ENCODE measurements at regions of chr10 and their contacts with region 1.

Region 1: DNA sequence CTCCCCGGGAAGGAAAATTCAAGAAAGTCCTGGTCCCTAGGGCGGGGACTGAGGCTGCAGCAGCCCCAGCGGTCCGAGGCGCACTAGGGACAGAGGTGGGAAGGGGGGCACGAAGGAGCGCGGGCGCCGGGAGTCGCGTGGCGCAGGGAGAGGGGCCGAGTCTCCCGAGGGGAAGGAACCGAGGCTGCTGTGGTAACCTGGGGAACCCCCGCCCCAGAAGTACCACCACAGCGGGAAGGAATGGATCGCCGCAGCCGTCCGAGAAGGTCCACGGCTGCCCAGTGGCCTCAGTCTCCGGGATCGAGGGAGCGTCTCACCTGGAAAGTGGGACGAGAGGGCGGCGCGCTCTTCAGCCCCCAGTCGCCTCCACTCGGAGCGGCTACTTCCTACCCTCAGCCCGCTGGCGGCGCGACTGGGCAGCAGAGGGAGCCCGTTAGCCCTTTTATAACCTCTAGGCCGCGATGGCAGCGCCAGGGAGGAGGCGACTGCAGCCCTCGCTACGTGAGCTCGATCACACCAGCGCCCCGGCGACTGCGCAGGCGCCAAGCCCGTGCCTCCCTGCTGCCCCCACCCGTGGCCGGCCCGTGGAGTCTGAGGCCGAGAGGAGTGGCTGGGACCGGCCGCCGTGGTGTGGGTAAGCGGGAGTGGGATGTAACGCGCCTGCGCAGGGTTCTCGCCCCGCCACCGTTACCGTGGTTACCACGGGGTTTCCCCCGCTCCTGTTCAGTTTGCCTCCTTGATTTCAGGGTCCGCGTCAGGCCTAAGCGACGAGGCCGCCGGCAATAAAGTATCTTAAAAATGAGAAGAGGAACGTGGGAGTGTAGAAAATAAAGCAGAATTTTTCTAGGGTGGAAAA is at the start of gene P4HA1:
- DNase-seq: peak; percentile 98 to 99
- ATAC-seq: peak; percentile 79 to 82
- H3K4me3 ChIP-seq: peak within 1 kb of the TSS; percentile 83 to 99 (median 94)
- H3K27ac ChIP-seq: peak within 1 kb of the TSS; percentile 91 to 100 (median 96)
- H3K4me1 ChIP-seq: peaks cover 53% of the 10 kb centered on the region in 2 donors
- H3K27me3 ChIP-seq: no peaks in the 10 kb centered on the region
- CTCF ChIP-seq: peak; percentile 70 to 89 (median 78)
- POLR2A ChIP-seq: peak; percentile 98 to 99
- total RNA-seq, gene P4HA1: 65.3 to 348 (median 217) TPM

Region 2: GRCh38 chr10:73110345-73110849 is 13.7 kb after region 1 on chr10 and contains the start of gene NUDT13:
- in situ Hi-C with region 1: no loop called
- intact Hi-C with region 1: loop called (anchors 1 kb)
- DNase-seq: peak; percentile 73 to 75
- ATAC-seq: peak; percentile 85 to 87
- H3K4me3 ChIP-seq: peak within 1 kb of the TSS; percentile 60 to 70 (median 65)
- H3K27ac ChIP-seq: peak within 1 kb of the TSS; percentile 91 to 96 (median 94)
- H3K4me1 ChIP-seq: peaks cover 20 to 30% of the 10 kb centered on the region in 2 donors
- H3K27me3 ChIP-seq: no peaks in the 10 kb centered on the region
- CTCF ChIP-seq: no peak
- POLR2A ChIP-seq: peak in 1 of 2 donors; percentile 72
- total RNA-seq, gene NUDT13: 1.7 to 5.3 (median 2.0) TPM

Region 3: DNA sequence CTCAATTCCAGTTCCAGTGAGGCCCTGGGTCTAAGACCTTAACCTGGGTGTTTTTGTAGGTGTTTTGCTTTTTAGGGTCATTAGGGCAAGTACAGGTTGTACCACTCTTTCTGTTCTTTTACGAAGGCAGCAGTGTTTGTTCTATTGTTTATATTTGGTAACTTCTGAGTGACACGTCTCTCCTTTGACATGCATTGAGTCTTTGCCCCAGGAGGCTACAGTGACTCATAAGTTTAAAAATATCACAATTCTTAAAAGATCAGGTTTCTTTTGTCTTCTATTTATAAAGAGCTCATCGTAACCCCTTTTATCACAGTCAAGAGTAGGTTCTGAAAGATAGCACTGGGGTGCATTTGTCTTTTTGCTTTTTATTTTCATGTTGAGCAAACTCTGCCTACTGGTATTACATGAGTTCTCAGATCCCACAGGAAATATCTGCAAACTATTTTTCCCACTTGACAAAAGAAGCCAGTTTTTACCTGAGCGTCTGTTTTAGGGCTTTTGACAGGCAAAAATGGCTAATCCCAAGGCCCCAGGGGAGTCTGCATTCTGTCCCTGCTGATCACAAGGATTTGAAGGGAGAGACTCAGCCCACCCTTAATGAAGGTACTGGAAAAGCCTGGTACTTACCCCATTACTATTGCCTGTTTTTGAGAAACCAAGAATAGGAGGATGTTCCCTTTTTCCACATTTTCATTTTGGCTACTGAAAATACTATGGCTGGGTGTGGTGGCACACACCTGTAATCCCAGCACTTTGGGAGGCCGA is 21.5 kb after region 1 on chr10:
- in situ Hi-C with region 1: no loop called
- intact Hi-C with region 1: loop called (anchors 1 kb)
- DNase-seq: peak in 1 of 2 donors; percentile 24
- ATAC-seq: peak; percentile 93 to 95
- H3K4me3 ChIP-seq: peak overlapping the region in 2 of 4 donors; percentile 15 to 27
- H3K27ac ChIP-seq: peak overlapping the region; percentile 91 to 96 (median 94)
- H3K4me1 ChIP-seq: peaks cover 31 to 45% of the 10 kb centered on the region in 2 donors
- H3K27me3 ChIP-seq: no peaks in the 10 kb centered on the region
- CTCF ChIP-seq: no peak
- POLR2A ChIP-seq: peak; percentile 63 to 82

Region 4: GRCh38 chr10:73159038-73159648 is 62.5 kb after region 1 on chr10:
- in situ Hi-C with region 1: loop called in 2 of 4 experiments (anchors 10 kb)
- intact Hi-C with region 1: loop called (anchors 1 kb)
- DNase-seq: peak; percentile 7 to 50
- ATAC-seq: peak in 1 of 2 donors; percentile 64
- H3K4me3 ChIP-seq: no peak overlapping the region
- H3K27ac ChIP-seq: peak overlapping the region in 3 of 4 donors; percentile 6 to 19 (median 19)
- H3K4me1 ChIP-seq: peaks cover 7 to 31% of the 10 kb centered on the region in 2 donors
- H3K27me3 ChIP-seq: no peaks in the 10 kb centered on the region
- CTCF ChIP-seq: peak; percentile 69 to 80 (median 75)
- POLR2A ChIP-seq: no peak

Measured in gastrocnemius medialis (tissue), 4 donors.